ENCODE measurements at regions of chr11 and their contacts with region 1.

Region 1: GRCh38 chr11:17207317-17208258 is at the start of gene PIK3C2A:
- DNase-seq: peak; percentile 86 to 96 (median 93)
- ATAC-seq: peak; percentile 96
- H3K4me3 ChIP-seq: peak within 1 kb of the TSS; percentile 95
- H3K4me3 Mint-ChIP-seq: peak within 1 kb of the TSS; percentile 95
- H3K27ac ChIP-seq: peak within 1 kb of the TSS; percentile 86 to 88
- H3K27ac Mint-ChIP-seq: peak within 1 kb of the TSS; percentile 90
- H3K4me1 ChIP-seq: peaks cover 27% of the 10 kb centered on the region
- H3K4me1 Mint-ChIP-seq: peaks cover 44% of the 10 kb centered on the region
- H3K27me3 ChIP-seq: no peaks in the 10 kb centered on the region
- H3K27me3 Mint-ChIP-seq: no peaks in the 10 kb centered on the region
- CTCF ChIP-seq: no peak
- total RNA-seq, gene PIK3C2A: 39.2 to 43.0 TPM

Region 2: GRCh38 chr11:16738193-16738946 is 469.2 kb before region 1 on chr11 and contains the start of gene C11orf58:
- CTCF ChIA-PET with region 1: no interaction called
- POLR2A ChIA-PET with region 1: interaction called, 7 read pairs
- intact Hi-C with region 1: loop called in 1 of 2 experiments (anchors 5 kb)
- DNase-seq: peak; percentile 89 to 99 (median 93)
- ATAC-seq: peak; percentile 94
- H3K4me3 ChIP-seq: peak within 1 kb of the TSS; percentile 78
- H3K4me3 Mint-ChIP-seq: peak within 1 kb of the TSS; percentile 73
- H3K27ac ChIP-seq: peak within 1 kb of the TSS; percentile 94 to 98
- H3K27ac Mint-ChIP-seq: no peak within 1 kb of the TSS
- H3K4me1 ChIP-seq: peaks cover 36% of the 10 kb centered on the region
- H3K4me1 Mint-ChIP-seq: peaks cover 24% of the 10 kb centered on the region
- H3K27me3 ChIP-seq: no peaks in the 10 kb centered on the region
- H3K27me3 Mint-ChIP-seq: no peaks in the 10 kb centered on the region
- CTCF ChIP-seq: no peak
- total RNA-seq, gene C11orf58: 145 to 150 TPM

Region 3: GRCh38 chr11:17142450-17142849 is 65.1 kb before region 1 on chr11:
- CTCF ChIA-PET with region 1: no interaction called
- POLR2A ChIA-PET with region 1: no interaction called
- intact Hi-C with region 1: no loop called
- DNase-seq: no peak
- ATAC-seq: no peak
- H3K4me3 ChIP-seq: no peak overlapping the region
- H3K4me3 Mint-ChIP-seq: no peak overlapping the region
- H3K27ac ChIP-seq: no peak overlapping the region
- H3K27ac Mint-ChIP-seq: no peak overlapping the region
- H3K4me1 ChIP-seq: no peaks in the 10 kb centered on the region
- H3K4me1 Mint-ChIP-seq: no peaks in the 10 kb centered on the region
- H3K27me3 ChIP-seq: no peaks in the 10 kb centered on the region
- H3K27me3 Mint-ChIP-seq: no peaks in the 10 kb centered on the region
- CTCF ChIP-seq: no peak

Region 4: DNA sequence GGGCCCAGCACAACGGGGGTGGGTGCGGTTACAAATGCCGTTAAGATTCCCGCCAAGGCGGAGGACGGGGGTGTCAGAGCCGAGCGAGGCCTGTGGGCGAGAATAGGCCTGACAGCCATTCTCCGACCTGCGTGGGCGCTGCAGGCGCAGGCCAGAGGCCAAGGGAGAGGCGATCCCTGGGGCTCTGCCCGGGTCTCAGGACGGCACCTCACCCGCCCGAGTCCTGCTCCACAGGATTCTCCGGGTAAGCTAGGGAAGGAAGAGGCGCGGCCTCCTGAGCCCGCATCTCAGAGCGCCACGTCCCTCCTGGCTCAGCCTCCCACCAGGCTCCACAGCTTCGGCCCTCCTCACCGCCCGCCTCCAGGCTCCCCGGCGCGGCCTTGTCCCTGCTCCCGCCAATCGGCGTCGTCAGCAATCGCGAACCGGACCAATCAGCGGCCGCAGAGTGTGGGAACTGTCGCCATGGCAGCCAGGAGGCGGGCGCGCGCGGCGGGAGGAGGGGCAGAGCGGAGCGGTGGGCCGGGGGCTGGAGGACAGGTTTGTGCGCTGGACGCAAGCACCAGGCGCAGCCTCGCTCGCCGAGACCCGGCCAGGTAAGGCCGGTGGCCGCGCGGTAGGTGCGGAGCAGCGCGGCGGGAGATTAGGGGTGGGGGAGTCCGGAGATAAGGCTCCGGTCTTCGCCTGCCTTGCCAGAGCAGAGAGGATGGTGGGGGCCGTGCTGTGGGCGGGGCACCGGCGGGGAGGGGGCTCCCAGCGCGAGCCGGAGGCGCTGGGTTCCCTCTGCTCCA is 68.8 kb after region 1 on chr11 and contains the start of gene NUCB2:
- CTCF ChIA-PET with region 1: no interaction called
- POLR2A ChIA-PET with region 1: interaction called, 17 read pairs
- intact Hi-C with region 1: loop called (anchors 2 kb)
- DNase-seq: peak; percentile 92 to 97 (median 95)
- ATAC-seq: peak; percentile 93
- H3K4me3 ChIP-seq: peak within 1 kb of the TSS; percentile 84
- H3K4me3 Mint-ChIP-seq: peak within 1 kb of the TSS; percentile 87
- H3K27ac ChIP-seq: peak within 1 kb of the TSS; percentile 80 to 87
- H3K27ac Mint-ChIP-seq: peak within 1 kb of the TSS; percentile 86
- H3K4me1 ChIP-seq: peaks cover 42% of the 10 kb centered on the region
- H3K4me1 Mint-ChIP-seq: peaks cover 35% of the 10 kb centered on the region
- H3K27me3 ChIP-seq: no peaks in the 10 kb centered on the region
- H3K27me3 Mint-ChIP-seq: no peaks in the 10 kb centered on the region
- CTCF ChIP-seq: no peak
- total RNA-seq, gene NUCB2: 65.2 to 73.0 TPM

Region 5: DNA sequence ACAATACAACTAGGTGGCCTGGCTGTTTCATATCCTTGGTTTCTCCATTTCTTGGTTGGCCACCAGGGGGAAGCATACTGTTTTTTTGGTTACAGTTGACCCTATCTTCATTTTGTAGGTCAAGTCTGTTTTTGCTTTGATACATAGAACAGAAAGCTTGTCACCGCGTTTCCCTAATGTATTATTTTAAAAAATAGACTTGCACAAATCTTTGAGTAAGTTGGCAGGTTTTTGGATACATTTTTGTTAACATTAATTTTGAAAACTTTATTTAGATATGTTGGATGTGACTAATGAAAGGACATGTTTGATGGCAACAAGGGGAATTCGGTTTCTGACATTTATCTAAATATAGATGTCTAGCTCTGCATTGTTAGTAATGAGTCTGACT is 147.0 kb after region 1 on chr11:
- CTCF ChIA-PET with region 1: no interaction called
- POLR2A ChIA-PET with region 1: interaction called, 8 read pairs
- intact Hi-C with region 1: loop called in 1 of 2 experiments (anchors 5 kb)
- DNase-seq: peak; percentile 13 to 81 (median 38)
- ATAC-seq: peak; percentile 15
- H3K4me3 ChIP-seq: no peak overlapping the region
- H3K4me3 Mint-ChIP-seq: peak overlapping the region; percentile 93
- H3K27ac ChIP-seq: no peak overlapping the region
- H3K27ac Mint-ChIP-seq: peak overlapping the region; percentile 72
- H3K4me1 ChIP-seq: peaks cover 21% of the 10 kb centered on the region
- H3K4me1 Mint-ChIP-seq: peaks cover 35% of the 10 kb centered on the region
- H3K27me3 ChIP-seq: no peaks in the 10 kb centered on the region
- H3K27me3 Mint-ChIP-seq: no peaks in the 10 kb centered on the region
- CTCF ChIP-seq: peak; percentile 82

Region 6: GRCh38 chr11:18012863-18013781 is 805.5 kb after region 1 on chr11 and contains the start of gene SERGEF:
- CTCF ChIA-PET with region 1: no interaction called
- POLR2A ChIA-PET with region 1: interaction called, 3 read pairs
- intact Hi-C with region 1: loop called in 1 of 2 experiments (anchors 5 kb)
- DNase-seq: peak; percentile 79 to 97 (median 93)
- ATAC-seq: peak; percentile 80
- H3K4me3 ChIP-seq: peak within 1 kb of the TSS; percentile 98
- H3K4me3 Mint-ChIP-seq: peak within 1 kb of the TSS; percentile 98
- H3K27ac ChIP-seq: peak within 1 kb of the TSS; percentile 82 to 83
- H3K27ac Mint-ChIP-seq: peak within 1 kb of the TSS; percentile 92
- H3K4me1 ChIP-seq: peaks cover 22% of the 10 kb centered on the region
- H3K4me1 Mint-ChIP-seq: peaks cover 33% of the 10 kb centered on the region
- H3K27me3 ChIP-seq: no peaks in the 10 kb centered on the region
- H3K27me3 Mint-ChIP-seq: no peaks in the 10 kb centered on the region
- CTCF ChIP-seq: no peak
- total RNA-seq, gene SERGEF: 35.2 to 37.1 TPM

Region 7: DNA sequence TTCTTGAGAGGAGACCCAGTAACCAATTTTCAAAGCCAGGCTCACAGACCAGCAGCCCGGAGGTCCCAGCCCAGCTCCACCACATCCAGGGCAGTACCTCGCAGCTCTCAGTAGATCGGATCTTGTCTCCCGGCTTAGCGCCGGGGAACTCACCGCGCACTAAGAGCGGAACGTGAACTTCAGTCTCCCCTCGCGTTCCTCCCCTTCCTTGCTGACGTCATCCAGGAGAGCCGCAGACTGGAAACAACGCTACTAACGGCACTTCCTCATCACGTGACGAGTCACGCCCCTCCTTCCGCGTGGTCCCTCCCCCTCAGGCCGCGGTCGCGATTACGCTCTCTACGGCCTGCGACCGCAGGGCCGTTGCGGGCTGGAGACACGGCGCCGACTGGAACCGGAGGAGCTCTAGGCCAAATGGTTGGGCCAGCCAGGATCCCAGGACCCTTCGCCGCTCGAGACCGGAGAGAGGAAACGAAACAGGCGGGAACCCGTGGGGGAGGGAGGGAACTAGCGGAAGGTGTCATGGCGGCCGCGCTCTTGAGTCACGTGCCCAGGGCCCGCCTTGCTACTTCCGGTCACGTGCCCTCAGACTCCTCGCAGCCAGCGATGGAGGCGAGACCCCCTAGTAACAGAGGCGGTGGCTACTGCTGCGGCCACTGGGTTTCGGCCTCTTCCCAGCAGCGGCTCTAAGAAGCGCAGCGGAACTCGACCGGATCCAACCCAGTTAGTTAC is 1114.6 kb after region 1 on chr11 and contains the starts of genes GTF2H1 and HPS5:
- CTCF ChIA-PET with region 1: no interaction called
- POLR2A ChIA-PET with region 1: no interaction called
- intact Hi-C with region 1: loop called in 1 of 2 experiments (anchors 5 kb)
- DNase-seq: peak; percentile 90 to 99 (median 93)
- ATAC-seq: peak; percentile 87
- H3K4me3 ChIP-seq: peak within 1 kb of the TSS; percentile 74
- H3K4me3 Mint-ChIP-seq: peak within 1 kb of the TSS; percentile 94
- H3K27ac ChIP-seq: peak within 1 kb of the TSS; percentile 97 to 98
- H3K27ac Mint-ChIP-seq: peak within 1 kb of the TSS; percentile 99
- H3K4me1 ChIP-seq: peaks cover 25% of the 10 kb centered on the region
- H3K4me1 Mint-ChIP-seq: peaks cover 87% of the 10 kb centered on the region
- H3K27me3 ChIP-seq: no peaks in the 10 kb centered on the region
- H3K27me3 Mint-ChIP-seq: no peaks in the 10 kb centered on the region
- CTCF ChIP-seq: no peak
- total RNA-seq, gene GTF2H1: 15.1 to 17.7 TPM
- total RNA-seq, gene HPS5: 8.8 to 9.3 TPM

Region 8: DNA sequence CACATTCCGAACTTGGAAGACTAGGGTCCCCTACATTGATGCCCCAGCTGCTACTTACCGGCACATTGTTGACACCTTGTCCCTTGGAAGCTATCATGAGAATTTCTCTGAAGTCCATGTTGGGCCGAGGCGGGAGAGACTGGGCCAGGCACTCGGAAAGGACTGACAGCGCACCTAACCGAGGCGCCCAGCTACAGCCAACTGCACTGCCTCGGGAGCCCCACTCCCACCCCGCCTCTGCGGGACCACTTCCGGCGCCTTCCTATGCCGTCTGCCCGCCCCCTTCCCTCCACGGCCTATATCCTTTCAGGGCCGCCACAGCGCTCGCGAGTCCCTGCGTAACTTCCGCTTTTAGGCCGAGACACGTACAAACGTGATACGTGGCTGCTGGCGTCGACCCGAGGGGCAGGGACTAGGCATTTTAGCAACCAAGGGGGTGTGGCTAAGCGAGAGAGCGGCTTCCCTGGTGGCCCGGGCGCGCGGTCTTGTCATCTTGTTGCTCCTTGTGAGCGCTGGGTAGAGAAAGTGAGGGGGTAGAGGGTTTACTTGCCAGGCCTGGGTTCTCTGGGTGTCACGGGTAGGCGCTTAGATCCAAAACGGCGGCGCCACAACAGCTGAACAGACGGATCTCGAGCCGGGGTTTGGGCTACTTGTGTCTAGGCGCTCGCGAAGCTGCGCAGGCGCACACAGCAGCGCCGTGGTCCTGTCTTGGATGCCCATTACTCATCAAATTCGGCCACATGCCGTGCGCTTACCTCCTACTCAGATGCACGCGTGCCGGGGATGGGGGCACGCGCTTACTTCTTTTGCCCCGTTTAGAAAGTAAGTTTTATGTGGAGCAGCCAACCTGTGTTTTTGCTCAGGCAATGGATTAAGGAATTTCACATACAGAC is 1426.8 kb after region 1 on chr11 and contains the start of gene SPTY2D1:
- CTCF ChIA-PET with region 1: no interaction called
- POLR2A ChIA-PET with region 1: no interaction called
- intact Hi-C with region 1: no loop called
- DNase-seq: peak; percentile 90 to 100 (median 96)
- ATAC-seq: peak; percentile 92
- H3K4me3 ChIP-seq: peak within 1 kb of the TSS; percentile 75
- H3K4me3 Mint-ChIP-seq: peak within 1 kb of the TSS; percentile 96
- H3K27ac ChIP-seq: peak within 1 kb of the TSS; percentile 88 to 98
- H3K27ac Mint-ChIP-seq: peak within 1 kb of the TSS; percentile 97
- H3K4me1 ChIP-seq: peaks cover 25% of the 10 kb centered on the region
- H3K4me1 Mint-ChIP-seq: peaks cover 36% of the 10 kb centered on the region
- H3K27me3 ChIP-seq: no peaks in the 10 kb centered on the region
- H3K27me3 Mint-ChIP-seq: no peaks in the 10 kb centered on the region
- CTCF ChIP-seq: no peak
- total RNA-seq, gene SPTY2D1: 58.7 to 66.0 TPM

Measured in CD4-positive, alpha-beta T cell (primary cell).